ENCODE measurements at regions of chr13 and their contacts with region 1.

Region 1: GRCh38 chr13:114078461-114079451 is 53.7 kb downstream of the RASA3 start:
- DNase-seq: peak in 1 of 2 donors; percentile 49
- H3K4me3 ChIP-seq: peak overlapping the region in 1 of 3 donors; percentile 18
- H3K27ac ChIP-seq: peak overlapping the region; percentile 70 to 80
- H3K4me1 ChIP-seq: peaks cover 7 to 8% of the 10 kb centered on the region in 2 donors
- H3K27me3 ChIP-seq: no peaks in the 10 kb centered on the region
- CTCF ChIP-seq: no peak
- POLR2A ChIP-seq: no peak

Region 2: GRCh38 chr13:112486386-112487126 is 1592.2 kb before region 1 on chr13:
- intact Hi-C with region 1: no loop called
- DNase-seq: no peak
- H3K4me3 ChIP-seq: no peak overlapping the region
- H3K27ac ChIP-seq: no peak overlapping the region
- H3K4me1 ChIP-seq: no peaks in the 10 kb centered on the region
- H3K27me3 ChIP-seq: no peaks in the 10 kb centered on the region
- CTCF ChIP-seq: no peak
- POLR2A ChIP-seq: no peak

Region 3: DNA sequence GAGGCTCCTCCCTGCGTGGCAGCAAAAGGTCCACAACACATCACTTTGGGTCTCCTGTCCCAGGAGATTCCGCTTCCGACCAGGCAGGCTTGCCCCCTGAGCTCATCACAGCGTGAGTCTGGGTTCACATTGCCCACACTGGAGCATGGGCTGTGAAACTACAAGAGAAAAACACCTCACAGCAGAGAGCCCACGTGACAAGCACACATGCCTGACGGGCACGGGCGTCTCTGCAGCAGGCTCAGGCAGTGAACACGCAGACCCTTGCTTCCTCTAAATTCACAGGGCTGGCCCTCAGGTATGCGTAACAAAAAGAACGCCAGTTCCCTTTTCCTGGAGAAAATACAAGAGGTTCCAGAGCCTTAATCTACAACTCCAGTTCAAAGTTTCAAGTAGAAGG is 11.7 kb after region 1 on chr13:
- intact Hi-C with region 1: no loop called
- DNase-seq: peak in 1 of 2 donors; percentile 2
- H3K4me3 ChIP-seq: no peak overlapping the region
- H3K27ac ChIP-seq: no peak overlapping the region
- H3K4me1 ChIP-seq: no peaks in the 10 kb centered on the region
- H3K27me3 ChIP-seq: no peaks in the 10 kb centered on the region
- CTCF ChIP-seq: no peak
- POLR2A ChIP-seq: no peak

Region 4: DNA sequence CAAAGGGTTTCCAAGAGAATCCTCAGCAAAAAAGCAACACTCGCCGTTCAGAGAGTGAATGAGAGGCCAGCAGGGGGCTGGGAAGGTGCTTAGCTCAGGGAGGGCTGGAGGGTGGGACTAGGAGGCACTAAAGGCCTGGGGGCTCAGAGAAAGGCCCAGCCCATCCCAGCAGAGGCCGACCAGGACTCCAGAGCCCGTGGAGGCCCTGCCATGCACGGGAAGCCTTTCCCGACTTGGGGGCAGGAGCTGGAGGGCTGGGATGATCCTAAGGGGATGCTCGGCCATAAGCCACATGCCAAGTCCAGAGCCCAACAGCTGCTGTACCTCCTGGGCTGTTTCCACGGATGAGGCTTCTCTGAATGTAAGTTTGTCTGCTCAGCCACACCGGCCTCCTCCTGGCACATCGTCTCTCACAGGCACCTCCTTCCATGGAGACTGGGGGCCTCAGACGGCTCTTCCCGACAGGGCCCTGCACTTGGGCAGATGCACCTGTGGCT is 34.1 kb after region 1 on chr13:
- intact Hi-C with region 1: loop called (anchors 2 kb)
- DNase-seq: peak in 1 of 2 donors; percentile 5
- H3K4me3 ChIP-seq: no peak overlapping the region
- H3K27ac ChIP-seq: no peak overlapping the region
- H3K4me1 ChIP-seq: no peaks in the 10 kb centered on the region
- H3K27me3 ChIP-seq: no peaks in the 10 kb centered on the region
- CTCF ChIP-seq: no peak
- POLR2A ChIP-seq: no peak

Measured in breast epithelium (tissue), 4 donors.